CD8-positive, alpha-beta T cell (primary cell): ENCODE measurements at regions of chr1 and their contacts with region 1.

Region 1: DNA sequence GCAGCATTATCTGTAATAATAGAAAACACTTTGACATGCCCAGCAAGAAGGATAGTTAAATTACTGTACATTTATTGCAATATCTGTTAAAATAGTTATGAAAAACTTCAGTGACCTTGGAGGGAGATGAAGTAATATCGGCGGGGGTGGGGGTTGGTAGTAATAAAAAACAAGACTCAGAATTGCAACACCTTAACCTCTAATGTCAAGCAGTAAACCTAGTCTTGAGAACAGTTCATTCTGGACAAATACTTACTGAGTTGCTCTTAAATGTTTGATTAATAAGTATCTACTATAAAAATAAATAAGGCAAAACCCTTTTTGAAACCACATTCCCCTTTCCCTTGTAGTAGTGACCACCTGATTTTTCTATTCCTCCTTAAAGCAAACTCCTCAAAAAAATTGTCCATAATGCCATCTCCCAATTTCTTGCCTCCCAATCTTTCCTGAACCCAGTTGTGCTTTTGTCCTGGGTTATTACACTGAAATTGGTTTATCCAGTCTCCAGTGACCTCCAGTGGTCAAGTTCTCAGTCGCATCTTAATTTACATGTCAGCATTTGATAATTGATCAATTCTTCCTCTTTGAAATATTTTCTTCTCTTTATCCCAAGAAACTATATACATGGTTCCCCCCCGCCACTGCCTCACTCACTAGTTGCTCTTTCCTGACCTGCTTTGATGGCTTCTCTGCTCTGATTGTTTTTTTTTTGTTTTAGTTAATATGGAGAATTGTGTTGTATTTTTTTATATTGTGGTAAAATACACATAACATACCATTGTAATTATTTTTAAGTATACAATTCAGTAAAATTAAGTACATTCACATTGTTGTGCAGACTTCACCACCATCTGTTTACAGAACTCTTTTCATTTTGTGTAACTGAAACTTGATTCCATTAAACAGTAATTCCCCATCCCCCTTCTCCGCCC is 36.8 kb downstream of the RAP1A start:
- DNase-seq: peak in 2 of 9 experiments; percentile 57 to 68
- ATAC-seq: no peak
- H3K4me3 ChIP-seq: no peak overlapping the region
- H3K4me3 Mint-ChIP-seq: no peak overlapping the region
- H3K27ac ChIP-seq: no peak overlapping the region
- H3K27ac Mint-ChIP-seq: peak overlapping the region; percentile 33
- H3K4me1 ChIP-seq: peaks cover 63% of the 10 kb centered on the region
- H3K4me1 Mint-ChIP-seq: peaks cover 53% of the 10 kb centered on the region
- H3K27me3 ChIP-seq: no peaks in the 10 kb centered on the region
- H3K27me3 Mint-ChIP-seq: no peaks in the 10 kb centered on the region
- CTCF ChIP-seq: peak; percentile 62

Region 2: GRCh38 chr1:111672331-111672730 is 16.0 kb after region 1 on chr1:
- CTCF ChIA-PET with region 1: no interaction called
- POLR2A ChIA-PET with region 1: no interaction called
- intact Hi-C with region 1: loop called in 1 of 2 experiments (anchors 2 kb)
- DNase-seq: no peak
- ATAC-seq: no peak
- H3K4me3 ChIP-seq: no peak overlapping the region
- H3K4me3 Mint-ChIP-seq: peak overlapping the region; percentile 30
- H3K27ac ChIP-seq: no peak overlapping the region
- H3K27ac Mint-ChIP-seq: peak overlapping the region; percentile 69
- H3K4me1 ChIP-seq: peaks cover 34% of the 10 kb centered on the region
- H3K4me1 Mint-ChIP-seq: peaks cover 79% of the 10 kb centered on the region
- H3K27me3 ChIP-seq: no peaks in the 10 kb centered on the region
- H3K27me3 Mint-ChIP-seq: no peaks in the 10 kb centered on the region
- CTCF ChIP-seq: no peak